ENCODE measurements at regions of chr1 and their contacts with region 1.

Region 1: GRCh38 chr1:59046730-59047157 is 250.2 kb upstream of the FGGY start:
- DNase-seq: peak; percentile 22
- ATAC-seq: peak; percentile 96
- H3K4me3 Mint-ChIP-seq: no peak overlapping the region
- H3K27ac Mint-ChIP-seq: peak overlapping the region; percentile 91
- H3K4me1 Mint-ChIP-seq: peaks cover 31% of the 10 kb centered on the region
- H3K27me3 Mint-ChIP-seq: no peaks in the 10 kb centered on the region
- CTCF ChIP-seq: no peak

Region 2: DNA sequence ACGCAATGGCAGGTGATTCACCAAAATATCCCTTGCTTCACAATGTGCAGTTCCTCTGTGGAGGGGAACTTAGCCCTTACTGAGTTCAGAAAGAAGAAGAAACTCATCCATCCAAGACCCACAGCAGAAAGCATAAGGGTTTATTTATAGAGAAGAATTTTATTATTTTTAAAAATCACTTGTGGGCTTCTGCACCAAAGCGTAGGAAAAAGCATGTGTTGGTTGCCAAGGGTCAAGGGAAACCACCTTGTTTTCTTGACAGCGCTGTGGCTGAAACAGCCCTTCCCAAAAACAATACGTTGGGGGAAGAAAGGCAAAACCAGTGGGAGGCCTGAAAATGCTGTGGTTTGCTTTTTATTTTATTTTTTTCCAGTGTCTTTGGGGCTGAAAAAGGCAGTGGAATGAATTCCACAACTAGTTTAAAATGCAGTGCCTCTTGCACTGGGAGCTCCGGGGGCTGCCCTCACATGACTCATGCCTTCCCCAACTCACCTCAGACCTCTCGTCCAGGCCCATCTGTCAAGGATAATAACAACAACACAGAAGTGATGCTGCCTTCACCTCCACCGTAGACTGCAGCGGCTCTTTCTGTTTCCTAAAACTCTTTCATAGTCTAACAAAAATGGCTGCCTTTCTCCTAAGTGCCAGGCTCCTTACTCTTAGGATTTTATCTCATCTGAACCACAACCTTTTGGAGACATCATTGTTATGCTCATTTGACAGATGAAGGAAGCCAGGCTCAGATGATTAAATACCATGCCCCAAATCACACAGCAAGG is 38.7 kb before region 1 on chr1:
- CTCF ChIA-PET with region 1: no interaction called
- POLR2A ChIA-PET with region 1: interaction called, 5 read pairs
- intact Hi-C with region 1: loop called (anchors 2 kb)
- DNase-seq: no peak
- ATAC-seq: peak; percentile 76
- H3K4me3 Mint-ChIP-seq: peak overlapping the region; percentile 62
- H3K27ac Mint-ChIP-seq: peak overlapping the region; percentile 90
- H3K4me1 Mint-ChIP-seq: peaks cover 82% of the 10 kb centered on the region
- H3K27me3 Mint-ChIP-seq: no peaks in the 10 kb centered on the region
- CTCF ChIP-seq: no peak

Measured in activated B cell treated with CpG ODN at 0.5 μM for 24 hours (primary cell).